Heart left ventricle (tissue), 16 donors: ENCODE measurements at regions of chr11 and their contacts with region 1.

Region 1: GRCh38 chr11:119205574-119206510 is at the start of gene CBL:
- DNase-seq: peak; percentile 95 to 97 (median 96)
- ATAC-seq: peak; percentile 93 to 98 (median 98)
- H3K4me3 ChIP-seq: peak within 1 kb of the TSS; percentile 84 to 99 (median 95)
- H3K27ac ChIP-seq: peak within 1 kb of the TSS; percentile 82 to 98 (median 95)
- H3K4me1 ChIP-seq: peaks cover 0 to 50% (median 17%) of the 10 kb centered on the region in 12 donors
- H3K27me3 ChIP-seq: no peaks in the 10 kb centered on the region
- CTCF ChIP-seq: peak; percentile 74 to 99 (median 92)
- POLR2A ChIP-seq: peak in 1 of 2 donors; percentile 67
- total RNA-seq, gene CBL: 6.1 to 20.4 (median 9.5) TPM

Region 2: DNA sequence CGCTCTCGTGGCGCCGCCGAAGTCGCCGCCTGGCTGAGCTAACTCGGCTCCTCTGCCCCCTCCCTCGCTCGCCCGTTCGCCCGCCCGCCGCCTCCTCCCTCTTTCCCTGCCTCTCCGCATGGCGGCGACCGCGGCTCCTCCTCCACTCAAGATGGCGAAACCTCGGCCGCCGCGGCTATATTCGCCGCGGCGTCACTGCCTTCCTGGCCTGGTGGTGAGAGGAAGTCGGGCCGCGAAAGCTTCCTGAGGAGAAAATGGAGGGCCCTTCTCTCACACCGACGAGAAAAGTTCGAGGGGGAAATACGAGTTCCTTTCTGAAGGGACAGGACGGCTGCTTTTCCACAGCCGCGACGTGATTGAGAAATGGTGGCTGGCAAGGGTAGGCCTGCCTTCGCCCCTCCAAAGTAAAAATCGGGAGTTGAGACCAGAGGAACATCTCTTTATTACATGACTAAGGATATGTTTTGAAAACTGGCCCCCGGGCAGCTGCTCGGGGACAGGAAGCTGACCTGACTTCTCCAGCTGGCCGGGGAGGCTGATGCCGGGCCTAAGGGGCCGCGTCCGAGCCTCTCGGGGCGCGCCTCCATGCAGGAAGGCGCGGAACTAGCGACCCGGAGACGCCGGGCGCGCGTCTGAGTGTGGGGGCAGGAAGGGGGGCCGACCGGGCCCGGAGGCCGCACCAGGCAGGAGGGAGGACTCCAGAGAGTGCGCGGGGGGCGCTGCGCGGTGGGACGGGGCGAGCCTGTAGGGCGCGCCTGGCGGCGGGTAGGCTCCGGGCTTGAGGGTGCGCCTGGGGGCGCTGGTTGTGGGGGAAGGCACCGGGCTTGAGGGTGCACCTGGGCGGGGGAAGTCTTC is 414.5 kb before region 1 on chr11 and contains the start of gene DDX6:
- intact Hi-C with region 1: no loop called
- DNase-seq: peak; percentile 92 to 97 (median 94)
- ATAC-seq: peak; percentile 70 to 89 (median 85)
- H3K4me3 ChIP-seq: peak within 1 kb of the TSS; percentile 66 to 98 (median 78)
- H3K27ac ChIP-seq: peak within 1 kb of the TSS; percentile 92 to 100 (median 99)
- H3K4me1 ChIP-seq: peaks cover 0 to 48% (median 36%) of the 10 kb centered on the region in 12 donors
- H3K27me3 ChIP-seq: no peaks in the 10 kb centered on the region
- CTCF ChIP-seq: peak in 10 of 12 donors; percentile 10 to 54 (median 38)
- POLR2A ChIP-seq: peak; percentile 39 to 87
- total RNA-seq, gene DDX6: 83.7 to 166 (median 114) TPM

Region 3: GRCh38 chr11:119284344-119285157 is 78.7 kb after region 1 on chr11:
- intact Hi-C with region 1: loop called in 8 of 10 experiments (anchors 2 to 10 kb)
- DNase-seq: no peak
- ATAC-seq: peak; percentile 58 to 82 (median 63)
- H3K4me3 ChIP-seq: no peak overlapping the region
- H3K27ac ChIP-seq: no peak overlapping the region
- H3K4me1 ChIP-seq: peaks cover 0 to 7% (median 0%) of the 10 kb centered on the region in 12 donors
- H3K27me3 ChIP-seq: no peaks in the 10 kb centered on the region
- CTCF ChIP-seq: peak; percentile 24 to 65 (median 46)
- POLR2A ChIP-seq: no peak

Region 4: GRCh38 chr11:119334174-119334930 is 128.5 kb after region 1 on chr11 and contains the start of gene RNF26:
- intact Hi-C with region 1: loop called in 2 of 10 experiments (anchors 5 to 10 kb)
- DNase-seq: peak; percentile 94 to 96 (median 96)
- ATAC-seq: peak; percentile 92 to 96 (median 93)
- H3K4me3 ChIP-seq: peak within 1 kb of the TSS; percentile 76 to 99 (median 86)
- H3K27ac ChIP-seq: peak within 1 kb of the TSS; percentile 50 to 91 (median 82)
- H3K4me1 ChIP-seq: peaks cover 5 to 47% (median 32%) of the 10 kb centered on the region in 12 donors
- H3K27me3 ChIP-seq: peaks cover 0 to 3% (median 0%) of the 10 kb centered on the region in 9 donors
- CTCF ChIP-seq: no peak
- POLR2A ChIP-seq: peak; percentile 11 to 48
- total RNA-seq, gene RNF26: 8.1 to 22.4 (median 11.8) TPM

Region 5: GRCh38 chr11:119381181-119381988 is 175.5 kb after region 1 on chr11 and contains the start of gene USP2:
- intact Hi-C with region 1: loop called in 1 of 10 experiments (anchors 2 kb)
- DNase-seq: peak; percentile 95 to 98 (median 97)
- ATAC-seq: peak; percentile 91 to 94 (median 92)
- H3K4me3 ChIP-seq: peak within 1 kb of the TSS; percentile 9 to 65 (median 50)
- H3K27ac ChIP-seq: peak within 1 kb of the TSS in 11 of 12 donors; percentile 37 to 88 (median 69)
- H3K4me1 ChIP-seq: peaks cover 0 to 40% (median 20%) of the 10 kb centered on the region in 12 donors
- H3K27me3 ChIP-seq: peaks cover 0 to 7% (median 0%) of the 10 kb centered on the region in 9 donors
- CTCF ChIP-seq: peak; percentile 77 to 99 (median 92)
- POLR2A ChIP-seq: peak in 1 of 2 donors; percentile 64
- total RNA-seq, gene USP2: 53.7 to 138 (median 108) TPM